HEK293T (cell line): ENCODE measurements at regions of chr10 and their contacts with region 1.

Region 1: GRCh38 chr10:119542988-119543813 is 682 bp upstream of the RGS10 start:
- DNase-seq: peak; percentile 62

Region 2: GRCh38 chr10:119466655-119467054 is 76.5 kb before region 1 on chr10:
- CTCF ChIA-PET with region 1: no interaction called
- POLR2A ChIA-PET with region 1: no interaction called
- DNase-seq: no peak

Region 3: DNA sequence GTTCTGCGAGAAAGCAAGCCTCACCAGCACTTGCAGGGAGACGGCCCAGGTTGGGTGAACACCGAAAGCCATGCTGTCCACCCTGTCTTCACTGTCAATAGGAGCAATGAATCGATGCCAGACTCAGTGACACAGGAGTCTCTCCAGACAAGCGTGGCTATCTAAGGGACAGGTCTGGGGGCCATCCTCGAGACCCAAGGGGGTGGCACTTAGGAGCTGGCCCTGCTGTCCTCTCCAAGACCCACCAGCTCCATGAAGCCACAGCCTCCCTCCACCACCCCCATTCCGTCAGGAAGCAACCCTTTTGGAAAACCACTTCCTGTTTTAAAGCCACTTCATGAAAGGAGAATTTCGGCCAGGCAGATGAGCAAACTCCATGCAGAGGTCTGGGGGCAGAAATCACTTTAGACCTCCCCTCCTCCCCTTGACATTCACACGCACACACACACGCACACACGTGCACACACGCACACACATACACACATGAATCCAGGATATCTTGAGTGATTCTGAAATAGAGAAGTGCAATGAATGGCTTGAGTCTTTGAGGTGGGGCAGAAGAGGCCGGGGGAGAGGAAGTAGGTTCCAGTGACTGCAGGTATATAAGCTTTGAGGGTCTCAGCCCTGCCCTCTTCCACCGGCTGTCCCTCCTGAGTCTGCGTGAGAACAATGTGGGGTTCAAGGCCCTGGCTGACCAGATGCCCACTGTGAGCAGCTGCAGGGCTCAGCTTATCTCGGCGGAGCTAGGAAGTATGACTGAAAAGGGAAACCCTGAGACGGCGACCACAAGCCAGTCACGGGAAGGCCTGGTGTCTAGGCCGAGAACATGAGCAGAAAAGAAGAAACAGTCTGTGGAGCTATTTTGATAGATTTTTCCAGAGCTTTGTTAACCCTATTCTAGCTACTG is 25.7 kb before region 1 on chr10:
- CTCF ChIA-PET with region 1: no interaction called
- POLR2A ChIA-PET with region 1: interaction called, 14 read pairs
- DNase-seq: no peak

Region 4: DNA sequence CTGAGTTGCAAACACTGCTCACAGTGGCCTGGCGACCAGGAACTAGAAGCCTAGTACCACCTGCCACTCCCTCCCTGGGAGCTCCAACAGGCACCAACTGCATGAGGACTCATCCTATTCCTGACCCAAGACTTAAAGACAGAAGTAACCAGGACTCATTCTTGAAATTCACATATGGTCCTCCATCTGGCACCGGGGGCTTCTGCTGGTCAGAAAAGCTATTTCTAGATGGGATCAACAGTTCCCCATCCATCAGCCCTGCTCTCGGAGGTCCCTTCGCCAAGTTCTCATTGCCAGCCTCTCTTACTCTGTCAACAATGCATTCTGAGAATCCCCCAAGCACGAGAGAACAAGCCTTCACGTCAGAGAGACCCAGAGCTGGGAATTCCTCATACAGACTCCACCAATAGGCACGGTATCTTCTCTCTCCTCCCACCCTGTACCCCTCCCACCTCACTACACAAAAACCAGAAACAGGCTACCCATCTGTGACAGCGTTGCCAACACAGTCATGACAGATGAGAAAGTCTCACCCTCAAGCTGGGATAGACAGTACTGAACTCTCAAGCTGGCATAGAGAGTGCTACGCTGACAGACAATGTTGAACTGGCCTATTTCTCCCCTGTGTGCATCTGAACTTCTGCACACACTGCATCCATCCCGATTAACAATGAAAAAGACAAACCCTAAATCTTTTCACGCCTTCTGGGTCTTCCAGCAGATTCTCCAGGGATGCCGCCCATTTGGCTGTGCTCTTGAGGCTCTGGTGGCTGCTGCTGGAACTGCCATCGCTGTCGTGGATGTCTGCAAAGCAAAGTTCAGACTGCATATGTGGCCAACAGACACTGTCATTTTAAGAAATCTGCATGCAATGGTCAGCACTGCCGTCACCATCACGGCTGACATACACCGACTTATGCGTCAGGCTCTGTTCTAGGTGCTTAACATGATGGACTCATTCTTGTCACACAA is 16.3 kb before region 1 on chr10:
- CTCF ChIA-PET with region 1: interaction called, 6 read pairs
- POLR2A ChIA-PET with region 1: interaction called, 25 read pairs
- DNase-seq: peak; percentile 45

Region 5: GRCh38 chr10:119596537-119597404 is 53.6 kb after region 1 on chr10 and contains the start of gene TIAL1:
- CTCF ChIA-PET with region 1: no interaction called
- POLR2A ChIA-PET with region 1: interaction called, 41 read pairs
- DNase-seq: peak; percentile 96

Region 6: DNA sequence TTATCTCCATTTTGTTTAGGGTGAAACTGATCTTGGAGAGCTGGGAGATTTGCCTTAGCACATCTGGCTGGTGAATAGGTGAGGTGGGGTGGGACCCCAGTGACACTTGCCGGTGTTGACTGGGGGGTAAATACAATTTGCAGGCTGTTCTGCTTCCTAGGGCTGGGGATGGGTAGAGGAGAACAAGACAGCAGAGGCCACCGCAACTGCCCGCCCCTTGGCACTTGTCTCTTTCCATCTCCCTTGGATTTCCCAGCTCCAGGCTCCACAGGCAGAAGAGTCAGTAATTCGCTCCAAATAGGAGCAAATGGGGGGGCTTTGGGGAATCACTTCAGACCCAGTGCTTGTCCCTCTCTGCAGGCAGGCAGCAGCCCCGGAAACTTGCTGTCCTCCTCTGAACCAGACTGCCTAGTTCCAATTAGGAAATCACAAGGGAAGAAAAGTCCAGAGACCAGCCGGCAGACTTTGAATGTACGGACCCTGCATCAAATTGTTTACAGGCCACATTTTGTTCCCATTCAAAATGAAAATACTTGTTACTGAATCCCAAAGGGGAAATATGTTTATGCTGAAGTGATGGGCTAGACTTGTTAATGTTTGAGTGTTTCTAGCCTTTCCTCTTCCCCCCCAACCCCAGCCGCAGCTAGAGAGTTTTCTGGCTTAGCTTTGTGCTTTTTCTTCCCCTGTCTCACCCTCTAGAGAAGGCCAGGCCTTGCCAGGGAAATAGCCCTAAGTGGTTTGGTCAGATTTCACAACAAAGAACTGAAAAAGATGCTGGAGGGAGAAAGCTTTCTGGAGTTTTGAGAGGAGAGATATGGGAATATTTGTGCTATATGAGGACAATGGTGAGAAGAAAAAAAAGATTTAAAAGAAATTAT is 172.7 kb after region 1 on chr10:
- CTCF ChIA-PET with region 1: no interaction called
- POLR2A ChIA-PET with region 1: no interaction called
- DNase-seq: no peak